ENCODE measurements at regions of chr1 and their contacts with region 1.

Region 1: DNA sequence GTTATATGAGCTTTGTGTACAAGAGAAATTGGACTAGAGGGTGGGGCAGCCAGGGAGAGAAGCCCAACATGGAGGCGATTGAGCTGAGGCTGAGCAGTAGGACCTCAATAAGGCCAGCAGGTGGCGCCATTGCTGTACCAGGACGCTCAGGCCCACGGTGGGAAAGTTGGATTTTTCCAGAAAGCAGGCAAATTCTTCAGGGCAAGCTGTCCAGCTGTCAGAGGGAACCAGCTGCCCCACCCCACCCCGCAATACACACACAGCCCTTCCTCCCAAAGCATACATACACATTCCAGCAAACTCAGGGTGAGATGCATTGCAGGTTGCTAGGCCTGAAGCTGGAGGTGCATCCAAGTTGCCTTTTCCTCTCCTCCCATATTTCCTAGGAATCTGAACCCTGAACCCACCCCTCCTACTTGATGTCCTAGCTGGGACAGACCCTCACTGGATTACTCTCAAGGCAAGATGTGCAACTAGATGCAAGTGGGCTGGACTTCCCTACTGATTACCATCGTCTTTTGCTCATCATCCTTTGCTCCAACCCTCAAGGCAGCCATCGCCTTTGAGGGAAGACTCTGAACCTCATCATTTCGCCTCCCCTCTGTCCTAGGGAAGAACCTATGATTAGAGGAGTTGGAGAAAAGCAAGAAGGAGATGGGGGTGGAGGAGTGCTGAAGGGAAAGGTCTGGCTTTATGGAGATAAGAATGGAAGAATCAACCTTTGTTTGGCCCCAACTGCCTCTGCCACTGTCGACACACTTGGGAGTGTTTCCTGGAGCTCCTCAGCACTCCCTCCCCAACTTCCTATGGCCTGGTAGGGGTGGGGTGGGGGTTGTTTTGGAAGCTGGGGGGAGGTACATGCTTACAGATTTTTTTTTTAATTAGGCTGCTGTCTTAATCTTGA is 25.5 kb downstream of the CD34 start:
- DNase-seq: peak; percentile 94
- H3K4me3 ChIP-seq: no peak overlapping the region
- H3K27ac ChIP-seq: peak overlapping the region; percentile 53
- H3K4me1 ChIP-seq: peaks cover 44% of the 10 kb centered on the region
- H3K27me3 ChIP-seq: no peaks in the 10 kb centered on the region
- CTCF ChIP-seq: peak; percentile 93
- POLR2A ChIP-seq: no peak

Region 2: DNA sequence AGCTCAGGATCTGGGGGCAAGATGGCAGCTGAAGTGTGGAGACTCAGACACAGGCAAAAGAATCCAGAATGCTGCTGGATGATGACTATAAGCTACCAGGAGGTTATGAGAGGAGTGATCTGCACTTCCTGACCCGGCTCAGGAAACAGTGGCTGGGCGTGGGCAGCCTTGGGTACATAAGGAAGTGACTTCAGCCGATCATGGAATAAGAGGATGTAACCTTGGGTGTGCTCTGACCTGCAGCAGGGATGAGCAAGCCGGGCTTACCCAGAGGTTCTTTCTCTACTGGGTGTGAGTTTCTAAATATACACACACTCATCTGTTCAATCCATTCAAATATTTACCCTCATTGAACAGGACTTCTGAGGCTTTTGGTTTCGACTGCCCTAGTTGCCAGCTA is 37.1 kb before region 1 on chr1:
- CTCF ChIA-PET with region 1: interaction called, 6 read pairs
- POLR2A ChIA-PET with region 1: no interaction called
- dilution Hi-C with region 1: no loop called
- intact Hi-C with region 1: loop called (anchors 1 kb)
- DNase-seq: peak; percentile 90
- H3K4me3 ChIP-seq: peak overlapping the region in 1 of 3 experiments; percentile 6
- H3K27ac ChIP-seq: peak overlapping the region; percentile 90
- H3K4me1 ChIP-seq: peaks cover 40% of the 10 kb centered on the region
- H3K27me3 ChIP-seq: no peaks in the 10 kb centered on the region
- CTCF ChIP-seq: no peak
- POLR2A ChIP-seq: peak; percentile 78

Region 3: GRCh38 chr1:207910591-207911354 is 25.4 kb after region 1 on chr1 and contains the start of gene CD34:
- CTCF ChIA-PET with region 1: interaction called, 10 read pairs
- POLR2A ChIA-PET with region 1: no interaction called
- dilution Hi-C with region 1: no loop called
- intact Hi-C with region 1: no loop called
- DNase-seq: peak; percentile 46
- H3K4me3 ChIP-seq: peak within 1 kb of the TSS; percentile 12 to 44 (median 21)
- H3K27ac ChIP-seq: no peak within 1 kb of the TSS
- H3K4me1 ChIP-seq: peaks cover 14% of the 10 kb centered on the region
- H3K27me3 ChIP-seq: peaks cover 9 to 16% of the 10 kb centered on the region in 2 experiments
- CTCF ChIP-seq: no peak
- POLR2A ChIP-seq: no peak
- total RNA-seq, gene CD34: 115 and 174 TPM in 2 replicates

Region 4: GRCh38 chr1:207941665-207942064 is 56.3 kb after region 1 on chr1:
- CTCF ChIA-PET with region 1: interaction called, 56 read pairs
- POLR2A ChIA-PET with region 1: interaction called, 5 read pairs
- dilution Hi-C with region 1: no loop called
- intact Hi-C with region 1: loop called (anchors 1 kb)
- DNase-seq: peak; percentile 97
- H3K4me3 ChIP-seq: peak overlapping the region in 1 of 3 experiments; percentile 8
- H3K27ac ChIP-seq: peak overlapping the region; percentile 92
- H3K4me1 ChIP-seq: peaks cover 52% of the 10 kb centered on the region
- H3K27me3 ChIP-seq: no peaks in the 10 kb centered on the region
- CTCF ChIP-seq: no peak
- POLR2A ChIP-seq: peak; percentile 49

Region 5: GRCh38 chr1:207981976-207982375 is 96.6 kb after region 1 on chr1:
- CTCF ChIA-PET with region 1: interaction called, 11 read pairs
- POLR2A ChIA-PET with region 1: no interaction called
- dilution Hi-C with region 1: no loop called
- intact Hi-C with region 1: loop called (anchors 1 kb)
- DNase-seq: peak; percentile 25
- H3K4me3 ChIP-seq: no peak overlapping the region
- H3K27ac ChIP-seq: no peak overlapping the region
- H3K4me1 ChIP-seq: no peaks in the 10 kb centered on the region
- H3K27me3 ChIP-seq: peaks cover 17 to 24% of the 10 kb centered on the region in 2 experiments
- CTCF ChIP-seq: peak; percentile 60 to 68
- POLR2A ChIP-seq: no peak

Region 6: GRCh38 chr1:208029381-208030287 is 144.3 kb after region 1 on chr1:
- CTCF ChIA-PET with region 1: interaction called, 14 read pairs
- POLR2A ChIA-PET with region 1: no interaction called
- dilution Hi-C with region 1: no loop called
- intact Hi-C with region 1: loop called (anchors 1 kb)
- DNase-seq: peak; percentile 86
- H3K4me3 ChIP-seq: no peak overlapping the region
- H3K27ac ChIP-seq: peak overlapping the region; percentile 85
- H3K4me1 ChIP-seq: peaks cover 43% of the 10 kb centered on the region
- H3K27me3 ChIP-seq: no peaks in the 10 kb centered on the region
- CTCF ChIP-seq: no peak
- POLR2A ChIP-seq: no peak

Region 7: GRCh38 chr1:208065862-208066261 is 180.5 kb after region 1 on chr1:
- CTCF ChIA-PET with region 1: no interaction called
- POLR2A ChIA-PET with region 1: no interaction called
- dilution Hi-C with region 1: no loop called
- intact Hi-C with region 1: no loop called
- DNase-seq: no peak
- H3K4me3 ChIP-seq: no peak overlapping the region
- H3K27ac ChIP-seq: no peak overlapping the region
- H3K4me1 ChIP-seq: peaks cover 11% of the 10 kb centered on the region
- H3K27me3 ChIP-seq: no peaks in the 10 kb centered on the region
- CTCF ChIP-seq: no peak
- POLR2A ChIP-seq: no peak

Region 8: GRCh38 chr1:208219659-208220282 is 334.4 kb after region 1 on chr1:
- CTCF ChIA-PET with region 1: no interaction called
- POLR2A ChIA-PET with region 1: no interaction called
- dilution Hi-C with region 1: no loop called
- intact Hi-C with region 1: loop called (anchors 5 kb)
- DNase-seq: peak; percentile 82
- H3K4me3 ChIP-seq: no peak overlapping the region
- H3K27ac ChIP-seq: peak overlapping the region; percentile 91
- H3K4me1 ChIP-seq: peaks cover 90% of the 10 kb centered on the region
- H3K27me3 ChIP-seq: no peaks in the 10 kb centered on the region
- CTCF ChIP-seq: no peak
- POLR2A ChIP-seq: peak; percentile 33

Region 9: DNA sequence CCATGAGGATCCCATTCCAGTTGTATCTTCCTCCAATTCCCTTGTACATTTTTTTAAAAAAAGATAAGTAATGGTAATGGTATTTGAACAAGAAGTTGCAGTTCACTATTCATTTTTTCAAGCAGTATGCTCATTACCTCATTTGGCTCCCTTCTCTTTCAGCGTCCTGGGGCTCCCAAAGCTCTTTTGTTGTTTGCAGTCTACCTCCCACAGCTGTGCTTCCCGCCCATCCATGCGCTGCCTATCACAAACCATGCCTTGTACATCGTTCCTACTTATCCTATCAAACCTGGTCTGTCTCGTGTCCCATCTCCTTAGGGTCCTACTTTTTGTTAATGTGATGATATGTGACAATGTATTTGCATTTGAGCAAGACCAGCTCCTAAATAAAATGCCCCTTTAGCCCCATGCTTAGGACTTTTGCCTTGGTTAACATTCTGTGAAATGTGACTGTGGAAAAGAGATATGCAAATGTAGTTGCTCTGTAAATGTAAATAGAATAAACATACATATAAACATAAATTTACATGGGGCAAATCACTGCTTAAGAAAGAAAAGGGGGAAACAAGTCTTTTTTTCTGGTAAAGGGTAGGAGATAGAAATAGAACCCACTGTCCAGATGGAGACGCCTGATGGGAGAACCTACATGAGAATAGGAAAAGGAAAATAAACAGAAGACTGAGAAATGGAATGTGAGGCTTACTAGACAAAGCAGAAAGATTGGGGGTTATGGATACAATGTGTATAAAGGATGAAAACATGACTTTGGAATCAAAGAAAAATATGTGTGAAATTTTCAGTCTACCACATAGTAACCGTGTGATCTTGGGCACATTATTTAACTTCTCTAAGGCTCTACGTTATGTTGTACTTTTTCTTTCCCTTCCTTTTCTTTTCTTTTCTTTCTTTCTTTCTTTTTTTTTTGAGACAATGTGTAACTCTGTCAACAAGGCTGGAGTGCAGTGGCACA is 418.6 kb after region 1 on chr1:
- CTCF ChIA-PET with region 1: no interaction called
- POLR2A ChIA-PET with region 1: no interaction called
- dilution Hi-C with region 1: no loop called
- intact Hi-C with region 1: no loop called
- DNase-seq: no peak
- H3K4me3 ChIP-seq: no peak overlapping the region
- H3K27ac ChIP-seq: no peak overlapping the region
- H3K4me1 ChIP-seq: no peaks in the 10 kb centered on the region
- H3K27me3 ChIP-seq: peaks cover 4 to 5% of the 10 kb centered on the region in 2 experiments
- CTCF ChIP-seq: no peak
- POLR2A ChIP-seq: no peak

Region 10: GRCh38 chr1:208387908-208388811 is 502.8 kb after region 1 on chr1:
- CTCF ChIA-PET with region 1: no interaction called
- POLR2A ChIA-PET with region 1: no interaction called
- dilution Hi-C with region 1: no loop called
- intact Hi-C with region 1: no loop called
- DNase-seq: no peak
- H3K4me3 ChIP-seq: no peak overlapping the region
- H3K27ac ChIP-seq: no peak overlapping the region
- H3K4me1 ChIP-seq: no peaks in the 10 kb centered on the region
- H3K27me3 ChIP-seq: no peaks in the 10 kb centered on the region
- CTCF ChIP-seq: no peak
- POLR2A ChIP-seq: no peak